B cell (primary cell): ENCODE measurements at regions of chr2 and their contacts with region 1.

Region 1: GRCh38 chr2:201231781-201232466 is 28.4 kb upstream of the CASP8 start:
- DNase-seq: peak; percentile 93
- ATAC-seq: peak; percentile 56
- H3K4me3 ChIP-seq: peak overlapping the region in 3 of 5 experiments; percentile 3 to 43 (median 25)
- H3K4me3 Mint-ChIP-seq: peak overlapping the region; percentile 94
- H3K27ac ChIP-seq: peak overlapping the region in 1 of 2 donors; percentile 24
- H3K27ac Mint-ChIP-seq: peak overlapping the region; percentile 84
- H3K4me1 ChIP-seq: peaks cover 41 to 49% of the 10 kb centered on the region in 2 donors
- H3K4me1 Mint-ChIP-seq: peaks cover 53% of the 10 kb centered on the region
- H3K27me3 ChIP-seq: no peaks in the 10 kb centered on the region
- H3K27me3 Mint-ChIP-seq: no peaks in the 10 kb centered on the region
- CTCF ChIP-seq: peak; percentile 97

Region 2: DNA sequence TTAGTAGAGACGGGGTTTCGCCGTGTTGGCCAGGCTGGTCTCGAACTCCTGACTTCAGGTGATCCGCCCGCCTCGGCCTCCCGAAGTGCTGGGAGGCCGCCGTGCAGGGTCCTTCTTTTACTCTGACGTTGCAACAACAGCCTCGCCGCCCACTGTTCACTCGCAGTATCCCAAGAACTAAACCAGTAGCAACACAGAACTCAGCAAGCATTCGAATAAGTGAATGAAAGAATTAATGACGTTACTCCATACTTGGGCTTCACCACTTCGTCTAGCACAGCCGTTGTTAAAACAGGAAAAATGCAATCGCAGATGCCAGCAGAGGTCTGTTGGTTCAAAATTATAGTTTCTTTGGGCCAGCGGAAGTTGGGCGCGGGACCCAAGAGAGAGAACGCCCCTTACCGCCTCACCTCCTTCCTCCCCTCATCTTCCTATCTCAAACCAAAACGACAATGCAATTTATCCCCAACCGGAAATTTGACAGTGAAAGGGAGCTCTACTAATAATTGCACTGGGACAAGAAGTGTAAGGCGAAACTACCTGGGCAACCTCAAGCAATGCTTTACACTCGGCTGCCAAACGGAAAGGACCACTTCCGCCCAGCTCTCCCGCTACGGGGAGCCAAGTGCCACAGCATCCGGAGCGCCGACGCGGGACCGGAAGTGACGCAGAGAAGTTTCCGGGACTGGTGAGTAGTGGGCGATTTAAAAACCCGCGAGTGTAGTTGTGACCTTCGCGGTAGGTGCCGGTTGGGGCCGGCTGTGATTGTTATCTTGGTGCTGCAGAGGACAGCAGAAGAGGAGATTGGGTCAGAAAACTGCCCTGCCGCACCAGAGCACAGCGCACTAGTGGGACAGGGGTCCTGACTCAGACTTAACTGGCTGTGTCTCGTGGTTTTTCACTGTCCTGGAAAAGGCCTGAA is 343.0 kb before region 1 on chr2 and contains the starts of genes NIF3L1 and PPIL3:
- CTCF ChIA-PET with region 1: interaction called, 8 read pairs
- POLR2A ChIA-PET with region 1: no interaction called
- intact Hi-C with region 1: loop called (anchors 1 kb)
- DNase-seq: peak; percentile 98
- ATAC-seq: peak; percentile 81
- H3K4me3 ChIP-seq: peak within 1 kb of the TSS; percentile 76 to 99 (median 87)
- H3K4me3 Mint-ChIP-seq: peak within 1 kb of the TSS; percentile 95
- H3K27ac ChIP-seq: peak within 1 kb of the TSS; percentile 90 to 93
- H3K27ac Mint-ChIP-seq: peak within 1 kb of the TSS; percentile 98
- H3K4me1 ChIP-seq: peaks cover 15 to 28% of the 10 kb centered on the region in 2 donors
- H3K4me1 Mint-ChIP-seq: peaks cover 43% of the 10 kb centered on the region
- H3K27me3 ChIP-seq: no peaks in the 10 kb centered on the region
- H3K27me3 Mint-ChIP-seq: no peaks in the 10 kb centered on the region
- CTCF ChIP-seq: no peak
- total RNA-seq, gene NIF3L1: 26.7 and 32.9 TPM in 2 replicates
- total RNA-seq, gene PPIL3: 55.5 and 57.9 TPM in 2 replicates

Region 3: DNA sequence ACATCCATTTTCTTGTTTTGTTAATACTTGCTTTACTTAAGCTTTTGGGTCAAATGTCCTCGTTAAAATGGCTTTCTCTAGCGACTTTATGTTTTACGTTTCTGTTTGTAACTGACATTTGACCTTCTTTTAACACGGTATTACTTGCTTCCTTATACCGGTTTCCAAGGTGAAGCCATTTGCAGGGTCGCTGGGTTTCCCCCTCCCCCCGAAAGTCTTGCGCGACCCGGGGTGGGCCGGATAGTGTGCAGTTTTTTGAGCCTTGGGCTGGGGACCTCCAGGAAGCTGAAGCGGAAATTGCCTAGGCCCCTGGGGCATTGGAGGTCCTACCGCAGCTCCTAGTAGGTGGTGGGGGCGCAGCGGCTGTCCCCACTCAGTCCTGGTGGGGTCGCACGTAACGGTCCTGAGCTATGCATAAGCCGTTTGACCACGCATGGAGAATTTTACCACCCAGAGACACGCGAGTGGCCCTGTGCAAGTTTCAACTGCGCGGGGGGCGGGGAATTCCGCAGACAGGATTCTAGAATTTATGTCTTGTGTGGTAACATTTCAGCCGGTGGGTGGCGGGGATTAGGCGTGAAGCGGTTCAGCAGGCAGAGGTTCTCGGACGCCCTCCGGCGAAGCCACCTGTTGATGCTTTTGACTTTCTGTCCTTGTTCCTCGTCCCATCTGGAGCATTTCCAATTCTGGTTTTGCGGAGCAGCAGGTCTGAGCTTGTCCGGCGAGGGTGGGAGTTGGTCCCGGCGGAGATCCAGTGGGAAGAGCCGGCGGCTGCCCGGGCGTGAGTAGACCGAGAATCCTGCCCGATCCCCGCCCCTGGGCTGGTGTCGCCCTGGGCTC is 113.6 kb before region 1 on chr2:
- CTCF ChIA-PET with region 1: interaction called, 69 read pairs
- POLR2A ChIA-PET with region 1: interaction called, 25 read pairs
- intact Hi-C with region 1: loop called (anchors 1 kb)
- DNase-seq: peak; percentile 95
- ATAC-seq: peak; percentile 64
- H3K4me3 ChIP-seq: peak overlapping the region; percentile 66 to 100 (median 97)
- H3K4me3 Mint-ChIP-seq: peak overlapping the region; percentile 98
- H3K27ac ChIP-seq: peak overlapping the region; percentile 94 to 96
- H3K27ac Mint-ChIP-seq: peak overlapping the region; percentile 98
- H3K4me1 ChIP-seq: peaks cover 63 to 72% of the 10 kb centered on the region in 2 donors
- H3K4me1 Mint-ChIP-seq: peaks cover 72% of the 10 kb centered on the region
- H3K27me3 ChIP-seq: no peaks in the 10 kb centered on the region
- H3K27me3 Mint-ChIP-seq: no peaks in the 10 kb centered on the region
- CTCF ChIP-seq: peak; percentile 55

Region 4: DNA sequence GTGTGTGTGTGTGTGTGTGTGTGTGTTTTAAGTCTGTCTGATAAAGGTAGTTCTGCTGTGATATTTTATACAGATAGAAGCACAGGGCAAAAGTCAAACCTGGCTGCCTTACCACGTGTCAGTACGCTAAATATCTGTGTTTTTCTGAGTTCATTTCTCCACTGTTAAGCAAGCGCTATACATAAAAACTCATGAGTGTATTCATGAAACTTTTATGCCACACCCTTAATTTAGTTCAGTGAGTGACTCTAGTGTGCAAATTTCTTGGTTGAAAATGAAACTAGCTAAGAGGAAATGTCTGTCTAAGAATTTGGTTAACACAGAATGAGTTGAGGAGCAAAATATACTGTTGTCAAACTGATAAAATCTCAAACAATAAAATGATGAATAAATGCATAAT is 37.8 kb before region 1 on chr2:
- CTCF ChIA-PET with region 1: interaction called, 42 read pairs
- POLR2A ChIA-PET with region 1: interaction called, 5 read pairs
- intact Hi-C with region 1: no loop called
- DNase-seq: peak; percentile 76
- ATAC-seq: peak; percentile 96
- H3K4me3 ChIP-seq: peak overlapping the region in 1 of 5 experiments; percentile 29
- H3K4me3 Mint-ChIP-seq: peak overlapping the region; percentile 80
- H3K27ac ChIP-seq: peak overlapping the region; percentile 31 to 50
- H3K27ac Mint-ChIP-seq: peak overlapping the region; percentile 89
- H3K4me1 ChIP-seq: peaks cover 46 to 55% of the 10 kb centered on the region in 2 donors
- H3K4me1 Mint-ChIP-seq: peaks cover 59% of the 10 kb centered on the region
- H3K27me3 ChIP-seq: no peaks in the 10 kb centered on the region
- H3K27me3 Mint-ChIP-seq: no peaks in the 10 kb centered on the region
- CTCF ChIP-seq: no peak

Region 5: DNA sequence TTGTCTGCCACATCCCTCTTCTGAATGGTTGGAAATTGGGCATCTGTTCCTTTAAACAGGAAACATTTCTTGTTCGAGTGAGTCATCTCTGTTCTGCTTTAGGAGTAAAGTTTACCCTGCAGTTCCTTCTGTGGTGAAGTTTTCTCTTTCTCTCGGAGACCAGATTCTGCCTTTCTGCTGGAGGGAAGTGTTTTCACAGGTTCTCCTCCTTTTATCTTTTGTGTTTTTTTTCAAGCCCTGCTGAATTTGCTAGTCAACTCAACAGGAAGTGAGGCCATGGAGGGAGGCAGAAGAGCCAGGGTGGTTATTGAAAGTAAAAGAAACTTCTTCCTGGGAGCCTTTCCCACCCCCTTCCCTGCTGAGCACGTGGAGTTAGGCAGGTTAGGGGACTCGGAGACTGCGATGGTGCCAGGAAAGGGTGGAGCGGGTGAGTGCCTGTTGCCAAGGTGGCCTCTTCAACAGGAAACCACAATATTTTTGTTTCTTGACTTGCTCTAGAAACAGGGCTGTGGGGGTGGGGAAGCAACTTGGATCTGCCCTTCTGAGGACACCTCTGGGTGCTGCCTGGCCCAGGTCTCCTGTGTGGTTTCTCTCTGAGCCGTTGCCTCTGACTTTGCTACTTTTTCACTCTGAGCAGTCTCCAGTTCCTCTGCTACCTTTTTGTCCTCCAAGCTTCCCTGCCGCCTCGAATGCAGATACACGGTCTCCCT is 26.2 kb after region 1 on chr2:
- CTCF ChIA-PET with region 1: interaction called, 123 read pairs
- POLR2A ChIA-PET with region 1: interaction called, 14 read pairs
- intact Hi-C with region 1: loop called (anchors 1 kb)
- DNase-seq: peak; percentile 94
- ATAC-seq: peak; percentile 67
- H3K4me3 ChIP-seq: peak overlapping the region; percentile 39 to 90 (median 58)
- H3K4me3 Mint-ChIP-seq: peak overlapping the region; percentile 87
- H3K27ac ChIP-seq: peak overlapping the region; percentile 97 to 98
- H3K27ac Mint-ChIP-seq: peak overlapping the region; percentile 99
- H3K4me1 ChIP-seq: peaks cover 58 to 84% of the 10 kb centered on the region in 2 donors
- H3K4me1 Mint-ChIP-seq: peaks cover 73% of the 10 kb centered on the region
- H3K27me3 ChIP-seq: no peaks in the 10 kb centered on the region
- H3K27me3 Mint-ChIP-seq: no peaks in the 10 kb centered on the region
- CTCF ChIP-seq: no peak

Region 6: DNA sequence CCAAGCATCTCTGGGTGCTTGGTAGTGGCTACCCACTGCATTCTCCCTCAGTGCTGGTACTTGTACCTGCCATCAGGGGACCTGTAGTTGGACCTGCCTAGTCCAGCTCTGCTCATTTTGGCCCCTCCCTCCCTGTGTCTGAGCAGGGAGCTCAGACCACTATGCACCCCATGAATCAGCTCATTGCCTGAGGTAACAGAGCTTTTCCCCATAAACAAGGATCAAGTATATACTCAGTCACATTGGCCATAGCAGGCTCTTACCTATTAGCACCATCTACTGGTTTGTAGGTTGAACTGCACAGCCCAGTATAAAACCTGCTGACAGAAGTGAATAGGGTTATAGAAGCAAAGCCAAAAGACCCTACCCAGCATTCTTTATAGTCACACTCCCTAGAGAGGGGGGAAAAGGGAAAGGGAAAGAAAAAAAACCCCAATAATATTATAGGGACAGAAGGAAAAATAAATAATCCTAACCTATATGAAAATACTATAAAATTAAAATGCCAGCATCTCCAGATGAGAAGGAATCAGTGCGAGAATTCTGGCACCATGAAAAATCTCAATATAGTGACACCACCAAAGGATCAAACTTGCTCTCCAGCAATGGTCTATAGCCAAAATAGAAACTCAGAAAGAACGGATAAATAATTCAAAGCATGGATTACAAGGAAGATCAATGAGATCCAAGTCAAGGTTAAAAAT is 132.1 kb after region 1 on chr2:
- CTCF ChIA-PET with region 1: interaction called, 172 read pairs
- POLR2A ChIA-PET with region 1: interaction called, 8 read pairs
- intact Hi-C with region 1: loop called (anchors 1 kb)
- DNase-seq: peak; percentile 69
- ATAC-seq: peak; percentile 97
- H3K4me3 ChIP-seq: no peak overlapping the region
- H3K4me3 Mint-ChIP-seq: no peak overlapping the region
- H3K27ac ChIP-seq: no peak overlapping the region
- H3K27ac Mint-ChIP-seq: no peak overlapping the region
- H3K4me1 ChIP-seq: peaks cover 0 to 3% of the 10 kb centered on the region in 2 donors
- H3K4me1 Mint-ChIP-seq: peaks cover 4% of the 10 kb centered on the region
- H3K27me3 ChIP-seq: no peaks in the 10 kb centered on the region
- H3K27me3 Mint-ChIP-seq: no peaks in the 10 kb centered on the region
- CTCF ChIP-seq: peak; percentile 92

Region 7: GRCh38 chr2:202265467-202266277 is 1033.7 kb after region 1 on chr2 and contains the start of gene NOP58:
- CTCF ChIA-PET with region 1: no interaction called
- POLR2A ChIA-PET with region 1: no interaction called
- intact Hi-C with region 1: loop called (anchors 10 kb)
- DNase-seq: peak; percentile 95
- ATAC-seq: peak; percentile 86
- H3K4me3 ChIP-seq: peak within 1 kb of the TSS; percentile 70 to 100 (median 97)
- H3K4me3 Mint-ChIP-seq: peak within 1 kb of the TSS; percentile 57
- H3K27ac ChIP-seq: peak within 1 kb of the TSS; percentile 81 to 93
- H3K27ac Mint-ChIP-seq: peak within 1 kb of the TSS; percentile 71
- H3K4me1 ChIP-seq: peaks cover 25 to 42% of the 10 kb centered on the region in 2 donors
- H3K4me1 Mint-ChIP-seq: peaks cover 19% of the 10 kb centered on the region
- H3K27me3 ChIP-seq: no peaks in the 10 kb centered on the region
- H3K27me3 Mint-ChIP-seq: no peaks in the 10 kb centered on the region
- CTCF ChIP-seq: no peak
- total RNA-seq, gene NOP58: 136 and 138 TPM in 2 replicates